ENCODE measurements at regions of chr2 and their contacts with region 1.

Region 1: DNA sequence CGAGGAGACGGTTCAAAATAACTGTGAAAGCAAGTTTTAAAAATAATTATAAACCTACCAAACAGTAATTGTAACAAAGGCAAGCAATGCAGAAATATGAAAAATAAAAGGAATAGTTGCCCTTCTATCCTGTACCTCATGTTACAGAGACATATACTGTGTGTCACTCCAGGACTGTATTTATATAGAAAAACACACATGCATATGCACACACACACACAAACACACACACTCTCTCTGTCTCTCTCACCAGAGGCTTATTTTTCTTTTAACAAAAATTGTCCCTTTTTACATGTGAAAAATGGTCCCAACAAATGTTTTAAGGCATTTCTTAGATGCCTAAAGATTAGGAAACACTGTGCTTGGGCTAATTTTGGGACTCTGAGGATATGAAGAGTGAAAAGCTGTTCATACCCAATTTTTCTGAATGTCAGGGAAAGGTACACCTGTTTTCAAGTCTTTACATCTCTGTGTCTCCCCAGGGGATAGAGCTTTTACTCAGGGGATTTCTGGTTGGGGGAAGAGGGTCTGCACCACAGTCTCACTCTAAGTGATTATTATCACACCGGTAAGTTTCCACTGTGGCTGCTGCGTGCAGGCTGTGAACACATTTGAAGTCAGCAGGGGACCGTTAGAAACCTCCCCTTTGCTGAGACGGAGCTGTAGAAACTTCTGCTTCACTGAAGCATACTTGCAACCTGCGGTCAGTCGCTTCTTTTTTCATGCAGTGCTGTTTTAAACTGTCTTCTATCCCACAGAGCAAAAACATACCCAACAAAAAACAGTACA is 51.4 kb upstream of the SPAG16 start:
- DNase-seq: peak; percentile 99
- H3K4me3 ChIP-seq: peak overlapping the region; percentile 56
- H3K27ac ChIP-seq: peak overlapping the region; percentile 97
- H3K4me1 ChIP-seq: peaks cover 98% of the 10 kb centered on the region
- CTCF ChIP-seq: no peak

Region 2: DNA sequence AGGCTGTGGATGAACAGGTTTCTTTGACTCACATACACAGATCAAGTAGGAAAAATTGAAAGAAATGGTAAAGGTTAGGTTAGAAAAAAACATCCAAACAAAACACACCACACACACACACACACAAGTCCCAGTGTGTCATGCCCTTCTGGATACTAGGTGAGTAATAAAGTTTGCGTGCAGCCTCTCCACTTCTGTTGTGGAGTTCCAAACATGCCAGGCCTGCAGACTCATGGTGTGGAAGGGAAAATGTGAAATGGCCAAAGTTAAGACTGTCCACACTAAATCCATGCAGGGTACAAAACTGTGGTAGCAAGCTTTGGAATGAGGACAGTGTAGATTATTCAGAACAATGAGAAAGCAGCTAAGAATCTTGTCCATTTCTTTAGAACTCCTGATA is 196.0 kb before region 1 on chr2:
- CTCF ChIA-PET with region 1: no interaction called
- POLR2A ChIA-PET with region 1: interaction called, 4 read pairs
- intact Hi-C with region 1: loop called (anchors 2 kb)
- DNase-seq: peak; percentile 9
- H3K4me3 ChIP-seq: peak overlapping the region; percentile 45
- H3K27ac ChIP-seq: peak overlapping the region; percentile 96
- H3K4me1 ChIP-seq: peaks cover 63% of the 10 kb centered on the region
- CTCF ChIP-seq: no peak

Region 3: GRCh38 chr2:213166109-213166508 is 66.7 kb before region 1 on chr2:
- CTCF ChIA-PET with region 1: no interaction called
- POLR2A ChIA-PET with region 1: interaction called, 7 read pairs
- intact Hi-C with region 1: loop called (anchors 1 kb)
- DNase-seq: peak; percentile 86
- H3K4me3 ChIP-seq: no peak overlapping the region
- H3K27ac ChIP-seq: peak overlapping the region; percentile 94
- H3K4me1 ChIP-seq: peaks cover 45% of the 10 kb centered on the region
- CTCF ChIP-seq: no peak

Region 4: GRCh38 chr2:213216461-213216860 is 16.4 kb before region 1 on chr2:
- CTCF ChIA-PET with region 1: no interaction called
- POLR2A ChIA-PET with region 1: interaction called, 15 read pairs
- intact Hi-C with region 1: no loop called
- DNase-seq: no peak
- H3K4me3 ChIP-seq: no peak overlapping the region
- H3K27ac ChIP-seq: no peak overlapping the region
- H3K4me1 ChIP-seq: peaks cover 6% of the 10 kb centered on the region
- CTCF ChIP-seq: no peak

Region 5: GRCh38 chr2:213261771-213262170 is 28.9 kb after region 1 on chr2:
- CTCF ChIA-PET with region 1: no interaction called
- POLR2A ChIA-PET with region 1: no interaction called
- intact Hi-C with region 1: no loop called
- DNase-seq: no peak
- H3K4me3 ChIP-seq: no peak overlapping the region
- H3K27ac ChIP-seq: no peak overlapping the region
- H3K4me1 ChIP-seq: no peaks in the 10 kb centered on the region
- CTCF ChIP-seq: no peak

Measured in OCI-LY7 (cell line).